ENCODE measurements at regions of chr3 and their contacts with region 1.

Region 1: DNA sequence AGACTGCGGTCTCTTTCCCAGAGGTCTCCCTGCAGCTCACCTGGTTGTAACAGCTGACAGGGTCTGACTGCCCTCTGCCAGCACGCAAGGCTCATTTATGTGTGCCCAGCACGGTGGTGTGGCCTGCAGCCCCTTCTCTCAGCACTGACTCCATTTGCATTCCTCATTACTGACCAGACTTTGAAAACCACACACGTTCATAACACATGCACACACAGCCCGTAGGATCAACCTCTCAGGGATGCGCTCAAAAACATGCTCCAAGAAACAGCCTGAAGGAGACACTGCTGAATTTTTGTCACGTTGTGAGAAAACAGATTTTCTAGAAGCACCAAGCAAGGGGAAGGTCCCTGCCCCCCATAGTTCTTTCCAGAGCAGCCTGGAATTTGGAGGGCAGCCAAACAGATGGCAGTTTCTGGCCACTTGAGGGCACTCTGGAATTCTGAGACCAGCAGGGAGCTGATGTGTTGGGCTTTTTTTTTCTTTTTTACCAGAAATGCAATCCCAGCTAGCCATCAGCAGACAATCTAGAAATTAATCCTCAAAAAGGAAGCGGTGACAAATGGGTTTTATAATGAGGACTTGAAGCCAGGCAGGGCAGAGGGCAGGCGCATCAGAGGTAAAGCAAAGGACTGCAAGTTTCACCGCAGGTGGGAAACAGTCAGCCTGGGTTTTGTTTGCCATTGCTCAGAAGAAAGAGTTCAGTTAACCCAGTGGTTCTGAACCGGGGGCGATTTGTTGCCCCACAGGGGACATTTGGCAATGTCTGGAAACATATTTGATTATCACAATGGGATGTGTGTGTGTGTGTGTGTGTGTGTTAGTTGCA is 170.5 kb upstream of the PROK2 start:
- DNase-seq: peak; percentile 75
- H3K4me3 Mint-ChIP-seq: no peak overlapping the region
- H3K27ac Mint-ChIP-seq: peak overlapping the region; percentile 61
- H3K4me1 Mint-ChIP-seq: peaks cover 30% of the 10 kb centered on the region
- H3K27me3 Mint-ChIP-seq: no peaks in the 10 kb centered on the region

Region 2: GRCh38 chr3:71978150-71978721 is 22.8 kb after region 1 on chr3:
- CTCF ChIA-PET with region 1: interaction called, 7 read pairs
- POLR2A ChIA-PET with region 1: interaction called, 8 read pairs
- intact Hi-C with region 1: loop called (anchors 1 kb)
- DNase-seq: peak; percentile 67
- H3K4me3 Mint-ChIP-seq: peak overlapping the region; percentile 38
- H3K27ac Mint-ChIP-seq: peak overlapping the region; percentile 88
- H3K4me1 Mint-ChIP-seq: peaks cover 44% of the 10 kb centered on the region
- H3K27me3 Mint-ChIP-seq: peaks cover 19% of the 10 kb centered on the region

Region 3: GRCh38 chr3:71998995-71999673 is 43.7 kb after region 1 on chr3:
- CTCF ChIA-PET with region 1: no interaction called
- POLR2A ChIA-PET with region 1: no interaction called
- intact Hi-C with region 1: loop called (anchors 2 kb)
- DNase-seq: peak; percentile 56
- H3K4me3 Mint-ChIP-seq: no peak overlapping the region
- H3K27ac Mint-ChIP-seq: peak overlapping the region; percentile 85
- H3K4me1 Mint-ChIP-seq: peaks cover 45% of the 10 kb centered on the region
- H3K27me3 Mint-ChIP-seq: peaks cover 12% of the 10 kb centered on the region

Region 4: GRCh38 chr3:72100601-72101187 is 145.2 kb after region 1 on chr3:
- CTCF ChIA-PET with region 1: no interaction called
- POLR2A ChIA-PET with region 1: no interaction called
- intact Hi-C with region 1: loop called (anchors 2 kb)
- DNase-seq: peak; percentile 97
- H3K4me3 Mint-ChIP-seq: peak overlapping the region; percentile 78
- H3K27ac Mint-ChIP-seq: peak overlapping the region; percentile 70
- H3K4me1 Mint-ChIP-seq: peaks cover 22% of the 10 kb centered on the region
- H3K27me3 Mint-ChIP-seq: peaks cover 3% of the 10 kb centered on the region

Region 5: GRCh38 chr3:72259755-72260587 is 304.5 kb after region 1 on chr3:
- CTCF ChIA-PET with region 1: no interaction called
- POLR2A ChIA-PET with region 1: no interaction called
- intact Hi-C with region 1: loop called (anchors 2 kb)
- DNase-seq: peak; percentile 53
- H3K4me3 Mint-ChIP-seq: no peak overlapping the region
- H3K27ac Mint-ChIP-seq: peak overlapping the region; percentile 61
- H3K4me1 Mint-ChIP-seq: peaks cover 38% of the 10 kb centered on the region
- H3K27me3 Mint-ChIP-seq: peaks cover 12% of the 10 kb centered on the region

Region 6: GRCh38 chr3:72418244-72418643 is 462.8 kb after region 1 on chr3:
- CTCF ChIA-PET with region 1: interaction called, 3 read pairs
- POLR2A ChIA-PET with region 1: no interaction called
- intact Hi-C with region 1: loop called (anchors 1 kb)
- DNase-seq: no peak
- H3K4me3 Mint-ChIP-seq: no peak overlapping the region
- H3K27ac Mint-ChIP-seq: no peak overlapping the region
- H3K4me1 Mint-ChIP-seq: peaks cover 69% of the 10 kb centered on the region
- H3K27me3 Mint-ChIP-seq: no peaks in the 10 kb centered on the region

Region 7: DNA sequence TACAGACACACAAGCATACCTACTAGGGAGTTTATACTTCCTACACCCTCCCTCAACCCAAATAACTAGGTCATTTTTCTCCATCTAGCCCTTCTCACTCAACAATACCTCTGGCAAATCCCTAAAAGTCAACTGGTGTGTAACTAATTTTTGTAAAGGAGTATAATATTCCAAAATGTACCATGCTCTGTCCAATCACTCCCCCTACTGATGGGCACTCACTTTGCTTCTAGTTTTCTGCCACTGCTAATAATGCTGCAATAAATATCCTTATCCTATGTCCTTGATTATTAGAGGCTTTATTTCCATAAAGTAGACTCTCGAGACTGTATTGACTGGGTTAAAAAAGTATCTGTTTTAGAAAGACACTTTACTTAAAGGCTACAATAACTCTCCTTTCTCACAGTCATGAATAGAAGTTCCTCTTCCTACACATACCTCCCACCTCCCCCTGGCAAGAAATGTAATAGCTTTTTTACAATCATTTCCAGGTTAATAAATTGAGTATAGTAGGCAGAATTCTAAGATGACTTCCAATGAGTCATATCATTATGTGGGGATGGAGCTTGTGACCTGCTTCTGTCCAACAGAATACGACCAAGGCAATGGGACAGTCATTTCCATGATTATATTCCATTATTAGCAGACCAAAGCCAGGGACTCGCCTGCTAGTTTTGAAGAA is 862.8 kb after region 1 on chr3:
- CTCF ChIA-PET with region 1: interaction called, 6 read pairs
- POLR2A ChIA-PET with region 1: no interaction called
- intact Hi-C with region 1: loop called (anchors 1 kb)
- DNase-seq: no peak
- H3K4me3 Mint-ChIP-seq: no peak overlapping the region
- H3K27ac Mint-ChIP-seq: no peak overlapping the region
- H3K4me1 Mint-ChIP-seq: peaks cover 22% of the 10 kb centered on the region
- H3K27me3 Mint-ChIP-seq: no peaks in the 10 kb centered on the region